Transverse colon (tissue), 4 donors: ENCODE measurements at regions of chr3 and their contacts with region 1.

Region 1: GRCh38 chr3:116707531-116707930 is 2.0 kb upstream of the TUSC7 start:
- DNase-seq: no peak
- H3K4me3 ChIP-seq: no peak overlapping the region
- H3K27ac ChIP-seq: no peak overlapping the region
- H3K4me1 ChIP-seq: no peaks in the 10 kb centered on the region
- H3K27me3 ChIP-seq: no peaks in the 10 kb centered on the region
- CTCF ChIP-seq: no peak
- EP300 ChIP-seq: no peak
- POLR2A ChIP-seq: no peak

Region 2: DNA sequence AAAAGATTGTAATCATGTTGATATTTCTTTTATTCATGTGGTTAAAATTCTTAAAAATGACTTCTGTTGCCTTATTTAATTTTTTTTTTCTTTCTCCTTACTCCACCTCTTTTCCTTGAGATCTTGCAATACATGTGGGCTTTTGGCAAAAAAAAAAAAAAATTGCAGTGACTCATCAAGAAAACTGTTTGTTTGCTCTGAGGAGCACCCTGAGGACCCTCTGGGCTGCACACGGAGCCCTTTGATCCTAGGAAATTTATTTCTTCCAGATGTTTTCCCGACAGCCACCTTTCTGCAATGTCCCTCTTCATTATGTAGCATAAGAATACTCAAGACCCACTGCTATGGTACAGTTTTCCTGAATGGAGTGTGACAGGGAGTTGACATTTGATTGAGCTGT is 1932.1 kb before region 1 on chr3:
- in situ Hi-C with region 1: no loop called
- intact Hi-C with region 1: loop called (anchors 5 kb)
- DNase-seq: no peak
- H3K4me3 ChIP-seq: no peak overlapping the region
- H3K27ac ChIP-seq: no peak overlapping the region
- H3K4me1 ChIP-seq: no peaks in the 10 kb centered on the region
- H3K27me3 ChIP-seq: no peaks in the 10 kb centered on the region
- CTCF ChIP-seq: no peak
- EP300 ChIP-seq: no peak
- POLR2A ChIP-seq: no peak

Region 3: GRCh38 chr3:115022835-115023398 is 1684.6 kb before region 1 on chr3:
- in situ Hi-C with region 1: no loop called
- intact Hi-C with region 1: no loop called
- DNase-seq: no peak
- H3K4me3 ChIP-seq: no peak overlapping the region
- H3K27ac ChIP-seq: no peak overlapping the region
- H3K4me1 ChIP-seq: peaks cover 0 to 19% (median 8%) of the 10 kb centered on the region in 4 donors
- H3K27me3 ChIP-seq: no peaks in the 10 kb centered on the region
- CTCF ChIP-seq: no peak
- EP300 ChIP-seq: no peak
- POLR2A ChIP-seq: no peak